ENCODE measurements at regions of chr3 and their contacts with region 1.

Region 1: DNA sequence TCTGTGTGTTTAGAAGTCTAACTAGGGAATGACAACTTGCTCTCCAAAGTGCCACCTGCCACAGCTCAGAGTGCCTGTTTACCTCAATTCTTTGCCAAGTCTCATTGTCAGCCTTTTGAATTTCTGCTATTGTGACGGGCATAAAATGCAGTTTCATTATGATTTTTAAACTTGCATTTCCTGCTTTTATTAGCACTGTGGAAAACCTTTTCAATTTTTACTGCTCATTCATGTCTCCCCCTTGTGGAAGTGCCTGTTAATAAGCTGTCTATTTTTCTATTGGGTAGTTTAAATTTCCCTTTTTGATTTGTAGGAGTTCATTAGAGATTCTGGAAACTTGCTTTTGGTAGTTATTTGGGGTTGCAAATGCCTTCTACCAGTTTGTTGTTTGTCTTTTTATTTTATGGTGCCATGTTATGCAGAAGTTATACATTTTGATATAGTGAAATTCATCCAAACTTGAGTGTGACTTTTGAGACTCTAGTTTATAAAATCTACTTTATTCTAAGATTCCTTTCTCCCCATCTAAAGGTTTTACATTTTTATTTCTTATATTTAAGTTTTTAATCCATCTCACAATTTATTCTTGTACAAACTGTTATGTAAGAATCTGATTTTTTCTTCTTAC is 53.9 kb upstream of the FRMD4B start:
- DNase-seq: no peak
- H3K4me3 Mint-ChIP-seq: no peak overlapping the region
- H3K27ac Mint-ChIP-seq: no peak overlapping the region
- H3K4me1 Mint-ChIP-seq: peaks cover 78% of the 10 kb centered on the region
- H3K27me3 Mint-ChIP-seq: no peaks in the 10 kb centered on the region

Region 2: GRCh38 chr3:69671082-69671952 is 231.6 kb after region 1 on chr3:
- intact Hi-C with region 1: loop called (anchors 5 kb)
- DNase-seq: no peak
- H3K4me3 Mint-ChIP-seq: no peak overlapping the region
- H3K27ac Mint-ChIP-seq: no peak overlapping the region
- H3K4me1 Mint-ChIP-seq: no peaks in the 10 kb centered on the region
- H3K27me3 Mint-ChIP-seq: no peaks in the 10 kb centered on the region

Region 3: GRCh38 chr3:69739204-69740102 is 299.7 kb after region 1 on chr3 and contains the start of gene MITF:
- intact Hi-C with region 1: loop called (anchors 5 kb)
- DNase-seq: peak; percentile 27
- H3K4me3 Mint-ChIP-seq: peak within 1 kb of the TSS; percentile 57
- H3K27ac Mint-ChIP-seq: no peak within 1 kb of the TSS
- H3K4me1 Mint-ChIP-seq: peaks cover 9% of the 10 kb centered on the region
- H3K27me3 Mint-ChIP-seq: peaks cover 47% of the 10 kb centered on the region
- total RNA-seq, gene MITF: 0.54 TPM in 1 of 2 replicates, not detected in the other

Measured in activated T-helper 1 cell treated with anti-CD3 and anti-CD28 coated beads, Interleukin-12 subunit alpha, Interleukin-12 subunit beta, Interleukin-2, Interleukin-4 antibody, amounts not matched to agents 30 ng/mL and 10 ng/mL and 1 ng/mL, durations not matched to agents 14 hours and 24 hours and 36 hours (primary cell).